ENCODE measurements at regions of chr10 and their contacts with region 1.

Region 1: GRCh38 chr10:31947144-31947926 is 18.7 kb upstream of the ARHGAP12 start:
- DNase-seq: peak in 2 of 4 experiments; percentile 46 to 71
- ATAC-seq: peak; percentile 81
- H3K4me3 ChIP-seq: no peak overlapping the region
- H3K27ac ChIP-seq: peak overlapping the region; percentile 53
- H3K4me1 ChIP-seq: peaks cover 9 to 32% of the 10 kb centered on the region in 2 experiments; a peak in 4 of 5 replicates
- H3K27me3 ChIP-seq: no peaks in the 10 kb centered on the region
- CTCF ChIP-seq: peak; percentile 50 to 69 (median 58); a peak in 5 of 6 replicates
- EP300 ChIP-seq: peak; percentile 6; the same call in 1 of the 2 replicates
- POLR2A ChIP-seq: no peak
- RAD21 ChIP-seq: peak; percentile 77 to 91

Region 2: GRCh38 chr10:31864834-31865518 is 82.4 kb before region 1 on chr10:
- CTCF ChIA-PET with region 1: interaction called, 5 read pairs
- POLR2A ChIA-PET with region 1: no interaction called
- in situ Hi-C with region 1: no loop called
- intact Hi-C with region 1: loop called (anchors 1 kb)
- DNase-seq: no peak
- ATAC-seq: no peak
- H3K4me3 ChIP-seq: no peak overlapping the region
- H3K27ac ChIP-seq: no peak overlapping the region
- H3K4me1 ChIP-seq: peaks cover 0 to 5% of the 10 kb centered on the region in 2 experiments; a peak in 2 of 5 replicates
- H3K27me3 ChIP-seq: no peaks in the 10 kb centered on the region
- CTCF ChIP-seq: no peak
- EP300 ChIP-seq: no peak
- POLR2A ChIP-seq: no peak
- RAD21 ChIP-seq: no peak

Region 3: DNA sequence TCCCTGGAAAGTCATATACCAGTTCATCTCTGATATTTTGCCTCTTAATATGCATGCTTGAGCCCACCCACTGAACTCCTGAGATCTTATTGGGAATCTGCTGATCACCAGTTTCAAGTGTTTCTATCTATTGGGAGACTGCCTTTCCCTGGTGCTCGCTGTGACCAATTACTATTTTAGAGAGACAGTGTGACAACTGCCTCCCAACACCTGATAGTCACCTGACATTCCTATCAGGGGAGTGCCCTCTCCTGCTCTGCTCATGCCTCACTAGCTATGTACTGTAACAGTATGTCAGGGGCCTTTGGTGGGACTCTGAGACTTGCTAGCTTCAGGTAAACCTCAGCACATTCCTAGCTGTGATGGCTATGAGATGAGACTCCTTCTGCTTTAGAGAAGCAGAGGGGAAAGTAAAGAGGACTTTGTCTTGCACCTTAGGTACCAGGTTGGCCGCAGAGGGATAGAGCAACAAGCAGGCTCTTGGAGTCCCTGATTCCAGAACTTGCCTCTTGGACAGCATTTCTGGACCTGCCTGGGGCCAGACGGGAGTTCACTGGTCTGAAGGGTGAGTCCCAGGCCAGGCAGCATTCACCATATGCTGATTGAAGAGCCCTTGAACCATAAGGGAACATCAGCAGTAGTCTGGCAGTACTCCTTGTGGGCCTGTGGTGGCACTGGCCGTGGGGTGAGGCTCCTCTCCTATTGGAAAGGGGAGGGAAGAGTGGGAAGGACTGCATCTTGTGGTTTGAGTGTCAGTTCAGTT is 15.7 kb after region 1 on chr10:
- CTCF ChIA-PET with region 1: no interaction called
- POLR2A ChIA-PET with region 1: interaction called, 12 read pairs
- in situ Hi-C with region 1: no loop called
- intact Hi-C with region 1: no loop called
- DNase-seq: no peak
- ATAC-seq: peak; percentile 44
- H3K4me3 ChIP-seq: no peak overlapping the region
- H3K27ac ChIP-seq: no peak overlapping the region
- H3K4me1 ChIP-seq: peaks cover 5 to 33% of the 10 kb centered on the region in 2 experiments; a peak in 4 of 5 replicates
- H3K27me3 ChIP-seq: no peaks in the 10 kb centered on the region
- CTCF ChIP-seq: no peak
- EP300 ChIP-seq: no peak
- POLR2A ChIP-seq: no peak
- RAD21 ChIP-seq: no peak

Region 4: GRCh38 chr10:31974434-31975124 is 27.2 kb after region 1 on chr10:
- CTCF ChIA-PET with region 1: no interaction called
- POLR2A ChIA-PET with region 1: interaction called, 5 read pairs
- in situ Hi-C with region 1: no loop called
- intact Hi-C with region 1: loop called (anchors 2 kb)
- DNase-seq: peak in 1 of 4 experiments; percentile 47
- ATAC-seq: no peak
- H3K4me3 ChIP-seq: no peak overlapping the region
- H3K27ac ChIP-seq: peak overlapping the region; percentile 35; the same call in 1 of the 3 replicates
- H3K4me1 ChIP-seq: peaks cover 38 to 47% of the 10 kb centered on the region in 2 experiments
- H3K27me3 ChIP-seq: no peaks in the 10 kb centered on the region
- CTCF ChIP-seq: no peak
- EP300 ChIP-seq: no peak
- POLR2A ChIP-seq: no peak
- RAD21 ChIP-seq: no peak